SK-N-SH (cell line): ENCODE measurements at regions of chr17 and their contacts with region 1.

Region 1: DNA sequence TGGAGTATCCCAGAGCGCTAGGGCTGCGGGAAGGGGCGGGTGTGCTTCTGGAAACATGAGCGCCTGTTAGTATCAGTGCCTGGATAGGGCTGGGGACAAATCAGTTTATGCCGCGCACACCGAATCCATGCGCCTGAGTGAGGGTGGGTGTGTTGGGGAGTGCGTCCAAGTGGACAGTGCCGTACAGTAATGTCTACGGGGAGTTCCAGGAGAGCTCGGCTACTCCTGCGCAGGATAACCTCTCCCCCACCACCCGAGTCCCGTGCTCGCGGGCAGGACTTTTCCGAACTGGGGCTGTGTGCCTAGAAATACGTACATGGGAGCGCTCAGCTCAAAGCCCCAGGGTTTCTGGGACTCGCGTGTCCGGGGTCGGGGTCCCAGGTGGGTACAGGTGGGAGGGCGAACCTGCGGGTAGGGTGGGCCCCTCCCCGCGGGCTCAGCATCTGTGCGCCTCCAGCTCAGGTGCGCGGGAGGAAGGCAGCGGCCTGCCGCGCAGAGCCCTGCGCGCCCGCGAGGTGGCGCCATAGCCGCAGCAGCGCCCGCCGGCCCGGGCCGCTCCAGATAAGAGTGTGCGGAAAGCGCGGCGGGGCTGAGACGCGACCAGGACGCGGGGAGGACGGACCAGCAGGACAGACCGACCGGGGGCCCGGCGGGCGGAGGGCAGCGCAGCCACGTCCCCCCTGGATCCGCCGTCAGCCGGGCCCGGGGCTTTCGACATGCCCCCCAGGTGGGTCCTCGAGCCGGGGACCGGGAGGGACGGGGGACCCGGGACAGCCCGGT is at the start of gene HIC1:
- DNase-seq: peak; percentile 93
- H3K4me3 ChIP-seq: peak within 1 kb of the TSS; percentile 57 to 62
- H3K27ac ChIP-seq: peak within 1 kb of the TSS in 1 of 2 experiments; percentile 55; a peak in 1 of 4 replicates
- H3K4me1 ChIP-seq: peaks cover 0 to 6% of the 10 kb centered on the region in 2 experiments; a peak in 1 of 4 replicates
- H3K27me3 ChIP-seq: no peaks in the 10 kb centered on the region
- CTCF ChIP-seq: peak; percentile 72
- EP300 ChIP-seq: no peak; a peak in 1 of 4 replicates
- RAD21 ChIP-seq: peak; percentile 88
- polyA plus RNA-seq, gene HIC1: 3.8 and 6.4 TPM in 2 replicates

Region 2: GRCh38 chr17:1882836-1883235 is 171.9 kb before region 1 on chr17:
- CTCF ChIA-PET with region 1: no interaction called
- POLR2A ChIA-PET with region 1: no interaction called
- DNase-seq: peak; percentile 49
- H3K4me3 ChIP-seq: no peak overlapping the region; a peak in 1 of 4 replicates
- H3K27ac ChIP-seq: no peak overlapping the region
- H3K4me1 ChIP-seq: no peaks in the 10 kb centered on the region
- H3K27me3 ChIP-seq: no peaks in the 10 kb centered on the region
- CTCF ChIP-seq: peak; percentile 57
- EP300 ChIP-seq: no peak
- RAD21 ChIP-seq: peak; percentile 66

Region 3: DNA sequence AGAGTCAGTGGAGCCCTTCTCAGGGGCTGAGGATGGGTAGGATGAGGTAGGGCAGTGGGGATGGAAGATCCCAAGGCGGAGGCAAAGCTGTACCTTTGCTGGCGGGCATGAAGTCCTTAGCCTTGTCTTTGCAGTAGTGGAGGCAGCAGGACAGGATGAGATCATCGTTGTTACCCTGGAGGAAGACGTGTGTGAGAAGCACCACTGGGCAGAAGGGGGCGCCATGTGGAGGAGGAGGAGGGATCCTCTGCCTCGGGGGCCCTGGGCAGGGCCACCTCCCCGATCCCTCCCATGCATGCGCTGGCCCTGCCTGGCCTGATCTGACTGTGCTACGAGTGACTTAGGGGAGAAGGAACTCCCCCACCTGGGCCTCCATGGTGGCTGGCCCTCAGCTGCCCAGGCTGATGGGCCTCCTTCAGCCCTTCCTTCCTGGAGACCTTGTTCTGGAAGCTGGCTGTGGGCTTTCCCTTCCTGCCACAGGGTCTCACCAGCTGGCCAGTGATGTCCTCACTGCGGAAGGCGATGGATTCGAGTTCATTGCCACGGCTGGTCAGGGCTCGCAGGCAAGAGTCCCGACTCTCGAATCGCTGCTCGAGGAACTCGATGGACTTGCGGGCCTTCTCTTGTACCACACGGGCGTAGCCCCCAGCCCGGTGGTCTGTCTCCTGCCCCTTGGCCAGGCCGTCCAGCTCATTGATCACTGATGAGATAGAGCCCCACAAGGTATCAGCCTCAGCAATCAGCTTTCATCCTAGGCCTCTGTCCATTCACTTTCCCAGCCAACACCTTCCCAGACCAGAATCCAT is 10.5 kb after region 1 on chr17:
- CTCF ChIA-PET with region 1: interaction called, 81 read pairs
- POLR2A ChIA-PET with region 1: no interaction called
- DNase-seq: peak; percentile 66
- H3K4me3 ChIP-seq: no peak overlapping the region
- H3K27ac ChIP-seq: peak overlapping the region in 1 of 2 experiments; percentile 69; a peak in 3 of 4 replicates
- H3K4me1 ChIP-seq: peaks cover 40 to 43% of the 10 kb centered on the region in 2 experiments; a peak in 3 of 4 replicates
- H3K27me3 ChIP-seq: no peaks in the 10 kb centered on the region
- CTCF ChIP-seq: peak; percentile 54
- EP300 ChIP-seq: no peak
- RAD21 ChIP-seq: peak; percentile 39

Region 4: GRCh38 chr17:2083613-2084128 is 29.0 kb after region 1 on chr17:
- CTCF ChIA-PET with region 1: interaction called, 23 read pairs
- POLR2A ChIA-PET with region 1: no interaction called
- DNase-seq: no peak
- H3K4me3 ChIP-seq: no peak overlapping the region
- H3K27ac ChIP-seq: peak overlapping the region in 1 of 2 experiments; percentile 89; a peak in 3 of 4 replicates
- H3K4me1 ChIP-seq: peaks cover 19 to 76% of the 10 kb centered on the region in 2 experiments
- H3K27me3 ChIP-seq: no peaks in the 10 kb centered on the region
- CTCF ChIP-seq: no peak
- EP300 ChIP-seq: no peak
- RAD21 ChIP-seq: no peak

Region 5: DNA sequence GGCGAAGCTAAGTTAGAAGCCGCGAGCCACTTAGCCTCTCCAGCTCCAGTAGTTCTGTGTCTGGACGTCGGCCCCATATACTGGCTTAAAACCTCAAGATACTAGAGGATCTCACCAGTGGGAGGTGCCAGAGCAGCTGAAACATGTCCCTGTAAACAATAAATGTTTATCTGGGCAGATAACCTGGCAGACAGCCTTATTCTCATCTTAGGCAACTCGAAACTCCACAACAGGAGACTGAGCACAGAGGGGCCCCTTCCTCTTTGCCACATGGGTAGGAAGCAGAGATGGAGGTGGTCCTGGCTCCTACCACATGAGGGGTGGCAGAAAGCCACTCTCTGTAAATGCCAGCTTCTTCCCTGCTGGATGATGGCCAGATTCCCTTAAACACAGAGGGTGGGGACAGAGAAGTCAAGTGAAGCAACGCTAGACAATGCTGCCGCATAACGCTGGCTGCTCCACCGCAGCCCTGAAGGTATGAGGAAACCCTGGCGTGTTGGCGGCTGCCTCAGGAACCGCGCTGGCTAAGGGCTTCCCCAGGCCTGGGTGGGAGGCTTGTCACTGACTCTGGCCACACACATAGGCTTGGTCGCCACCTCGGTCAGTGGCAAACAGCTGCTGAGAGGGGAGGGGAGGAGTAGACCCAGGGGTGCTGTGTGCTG is 68.1 kb after region 1 on chr17:
- CTCF ChIA-PET with region 1: interaction called, 34 read pairs
- POLR2A ChIA-PET with region 1: no interaction called
- DNase-seq: peak; percentile 56
- H3K4me3 ChIP-seq: no peak overlapping the region
- H3K27ac ChIP-seq: peak overlapping the region in 1 of 2 experiments; percentile 14; a peak in 1 of 4 replicates
- H3K4me1 ChIP-seq: peaks cover 13 to 18% of the 10 kb centered on the region in 2 experiments; a peak in 2 of 4 replicates
- H3K27me3 ChIP-seq: no peaks in the 10 kb centered on the region
- CTCF ChIP-seq: no peak
- EP300 ChIP-seq: no peak
- RAD21 ChIP-seq: peak; percentile 43

Region 6: DNA sequence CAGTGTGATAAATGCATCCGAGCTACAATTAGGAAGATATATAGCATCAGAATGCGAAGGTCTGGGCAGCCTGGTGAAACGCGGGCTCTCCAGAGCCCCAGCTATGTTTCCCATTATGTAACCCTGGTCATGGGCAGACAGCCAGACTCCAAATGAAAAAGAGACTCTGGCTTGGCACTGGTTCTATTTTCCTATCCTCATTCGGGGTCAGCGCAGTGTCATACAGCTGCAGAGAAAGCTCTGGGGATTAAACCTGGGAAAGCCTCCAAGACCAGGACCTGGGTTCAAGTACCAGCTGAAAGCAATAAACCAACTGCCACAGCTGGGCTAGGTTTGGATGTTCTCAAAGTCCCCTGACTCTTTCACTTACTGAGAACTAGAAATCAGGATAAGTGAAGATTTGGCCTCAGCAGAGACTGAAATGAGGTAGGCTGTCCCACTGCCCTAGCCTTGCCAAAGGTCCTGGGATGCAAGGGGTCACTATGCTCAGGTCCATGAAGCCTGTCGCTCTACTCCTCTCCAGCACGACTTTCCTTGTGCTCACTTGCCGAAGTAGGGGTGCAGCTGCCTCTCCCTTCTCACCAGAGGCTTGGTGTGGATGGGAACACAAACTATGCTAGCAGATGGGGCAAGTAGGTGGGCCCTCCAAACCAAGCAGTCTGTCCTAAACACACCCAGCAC is 125.1 kb after region 1 on chr17:
- CTCF ChIA-PET with region 1: interaction called, 20 read pairs
- POLR2A ChIA-PET with region 1: no interaction called
- DNase-seq: peak; percentile 81
- H3K4me3 ChIP-seq: no peak overlapping the region
- H3K27ac ChIP-seq: peak overlapping the region; percentile 85 to 92
- H3K4me1 ChIP-seq: peaks cover 64 to 73% of the 10 kb centered on the region in 2 experiments
- H3K27me3 ChIP-seq: no peaks in the 10 kb centered on the region
- CTCF ChIP-seq: no peak
- EP300 ChIP-seq: peak; percentile 91 to 93
- RAD21 ChIP-seq: peak; percentile 45

Region 7: GRCh38 chr17:2233441-2233947 is 178.8 kb after region 1 on chr17:
- CTCF ChIA-PET with region 1: interaction called, 87 read pairs
- POLR2A ChIA-PET with region 1: no interaction called
- DNase-seq: no peak
- H3K4me3 ChIP-seq: no peak overlapping the region
- H3K27ac ChIP-seq: peak overlapping the region; percentile 76 to 93
- H3K4me1 ChIP-seq: peaks cover 21 to 37% of the 10 kb centered on the region in 2 experiments
- H3K27me3 ChIP-seq: no peaks in the 10 kb centered on the region
- CTCF ChIP-seq: no peak
- EP300 ChIP-seq: no peak
- RAD21 ChIP-seq: no peak

Region 8: GRCh38 chr17:2259769-2260536 is 205.3 kb after region 1 on chr17:
- CTCF ChIA-PET with region 1: interaction called, 15 read pairs
- POLR2A ChIA-PET with region 1: no interaction called
- DNase-seq: no peak
- H3K4me3 ChIP-seq: no peak overlapping the region
- H3K27ac ChIP-seq: no peak overlapping the region; a peak in 1 of 4 replicates
- H3K4me1 ChIP-seq: peaks cover 2 to 23% of the 10 kb centered on the region in 2 experiments; a peak in 3 of 4 replicates
- H3K27me3 ChIP-seq: no peaks in the 10 kb centered on the region
- CTCF ChIP-seq: no peak
- EP300 ChIP-seq: no peak
- RAD21 ChIP-seq: no peak